Panc1 (cell line): ENCODE measurements at regions of chr7 and their contacts with region 1.

Region 1: GRCh38 chr7:1616741-1617140 is 46.9 kb upstream of the PSMG3 start:
- DNase-seq: no peak
- ATAC-seq: no peak
- H3K4me3 ChIP-seq: no peak overlapping the region
- H3K27ac ChIP-seq: no peak overlapping the region
- H3K4me1 ChIP-seq: no peaks in the 10 kb centered on the region
- H3K27me3 ChIP-seq: no peaks in the 10 kb centered on the region
- CTCF ChIP-seq: no peak

Region 2: GRCh38 chr7:1569833-1570633 is 46.7 kb before region 1 on chr7 and contains the start of gene PSMG3:
- CTCF ChIA-PET with region 1: no interaction called
- POLR2A ChIA-PET with region 1: no interaction called
- in situ Hi-C with region 1: no loop called
- intact Hi-C with region 1: no loop called
- DNase-seq: no peak
- ATAC-seq: peak; percentile 94
- H3K4me3 ChIP-seq: peak within 1 kb of the TSS; percentile 83 to 96
- H3K27ac ChIP-seq: peak within 1 kb of the TSS; percentile 90
- H3K4me1 ChIP-seq: peaks cover 31% of the 10 kb centered on the region
- H3K27me3 ChIP-seq: no peaks in the 10 kb centered on the region
- CTCF ChIP-seq: no peak
- total RNA-seq, gene PSMG3: 59.4 TPM

Region 3: GRCh38 chr7:1969459-1970284 is 352.9 kb after region 1 on chr7:
- CTCF ChIA-PET with region 1: interaction called, 10 read pairs
- POLR2A ChIA-PET with region 1: no interaction called
- in situ Hi-C with region 1: no loop called
- intact Hi-C with region 1: no loop called
- DNase-seq: no peak
- ATAC-seq: no peak
- H3K4me3 ChIP-seq: no peak overlapping the region
- H3K27ac ChIP-seq: no peak overlapping the region
- H3K4me1 ChIP-seq: no peaks in the 10 kb centered on the region
- H3K27me3 ChIP-seq: no peaks in the 10 kb centered on the region
- CTCF ChIP-seq: no peak